Activated naive CD4-positive, alpha-beta T cell treated with anti-CD3 and anti-CD28 coated beads for 36 hours (primary cell): ENCODE measurements at regions of chr18 and their contacts with region 1.

Region 1: DNA sequence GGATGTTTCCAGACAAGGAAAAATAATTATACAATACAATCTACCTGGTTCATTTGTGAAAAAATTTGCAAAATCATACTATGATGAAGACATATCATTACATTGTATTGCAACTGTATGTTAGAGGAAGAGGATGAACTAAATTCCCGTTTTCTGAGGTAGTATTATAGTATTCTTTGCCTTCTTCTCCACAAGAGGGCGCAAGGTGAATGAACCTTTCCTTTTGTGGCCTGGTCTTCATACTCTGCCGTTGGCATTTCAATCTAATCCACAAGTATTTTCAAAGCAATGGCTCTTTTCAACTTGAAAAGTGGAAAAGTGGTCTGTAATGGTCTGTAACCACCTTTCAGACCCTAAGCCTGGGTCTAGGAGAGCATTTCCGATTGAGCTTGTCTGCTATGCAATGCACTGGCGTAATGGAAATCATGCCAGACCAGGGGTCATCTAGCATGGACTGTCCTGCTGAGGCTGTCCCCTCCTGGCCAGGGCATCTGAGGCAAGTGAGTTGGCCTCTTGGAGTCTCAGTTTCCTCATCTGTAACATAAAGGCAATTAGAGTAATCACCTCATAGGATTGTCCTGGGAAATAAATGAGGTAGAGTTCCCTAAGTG is 30.8 kb upstream of the ZNF396 start:
- DNase-seq: peak; percentile 62
- H3K4me3 Mint-ChIP-seq: no peak overlapping the region
- H3K27ac Mint-ChIP-seq: no peak overlapping the region
- H3K4me1 Mint-ChIP-seq: peaks cover 17% of the 10 kb centered on the region
- H3K27me3 Mint-ChIP-seq: no peaks in the 10 kb centered on the region

Region 2: DNA sequence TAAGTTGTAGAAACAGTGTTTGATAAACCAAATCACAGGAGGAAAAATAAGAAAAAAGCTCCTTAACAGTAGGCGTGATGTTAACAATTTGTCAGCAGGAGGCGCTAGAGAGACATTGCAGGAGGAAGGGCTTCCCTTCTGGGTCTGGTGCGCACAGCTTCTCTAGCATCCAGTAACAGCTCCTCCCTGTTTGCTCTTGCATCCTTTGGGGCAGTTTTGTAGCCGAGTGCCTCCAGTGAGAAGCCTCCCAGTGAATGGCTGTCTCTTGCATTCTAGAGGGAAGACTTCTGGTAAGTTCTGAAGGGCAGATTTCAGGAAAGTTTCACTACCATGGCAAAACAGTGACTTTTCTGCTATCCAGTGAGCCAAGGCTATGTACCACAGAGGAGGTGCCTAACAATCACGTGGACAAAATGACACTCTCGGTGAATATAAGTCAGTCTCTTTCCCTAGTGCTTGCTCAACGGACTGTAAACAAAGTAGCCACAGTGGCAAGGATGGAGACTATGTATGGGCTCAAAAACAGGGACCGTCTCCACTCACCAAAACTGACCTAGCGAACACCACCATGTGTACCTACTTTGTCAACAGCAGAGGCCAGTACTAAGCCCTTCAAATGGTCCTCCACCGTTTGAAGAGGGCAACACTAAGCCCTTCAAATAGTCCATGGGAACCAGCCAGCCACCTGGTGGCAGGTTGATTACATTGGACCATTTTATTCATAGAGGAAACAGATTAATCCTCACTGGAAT is 21.2 kb before region 1 on chr18:
- CTCF ChIA-PET with region 1: interaction called, 3 read pairs
- intact Hi-C with region 1: loop called (anchors 1 kb)
- DNase-seq: peak; percentile 81
- H3K4me3 Mint-ChIP-seq: no peak overlapping the region
- H3K27ac Mint-ChIP-seq: no peak overlapping the region
- H3K4me1 Mint-ChIP-seq: peaks cover 2% of the 10 kb centered on the region
- H3K27me3 Mint-ChIP-seq: peaks cover 23% of the 10 kb centered on the region

Region 3: DNA sequence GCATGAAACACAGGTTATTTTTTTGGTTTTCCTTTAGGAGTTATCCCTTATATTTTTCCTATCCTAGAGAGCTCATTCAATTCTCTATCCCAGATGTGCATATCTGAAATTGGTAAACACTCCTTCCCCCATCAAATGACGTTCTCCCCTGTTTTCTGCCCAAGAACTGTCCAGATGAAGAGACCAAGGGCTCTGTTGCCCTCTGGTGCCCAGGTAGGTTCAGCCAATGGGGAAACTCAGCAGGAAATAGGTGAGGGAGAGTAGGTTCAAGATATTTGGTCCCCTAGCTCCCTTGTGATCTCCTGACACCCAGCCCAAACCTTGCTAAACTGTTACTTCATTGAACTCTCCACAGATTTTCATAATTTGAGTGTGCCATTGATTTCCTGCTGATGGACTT is 103.9 kb after region 1 on chr18:
- CTCF ChIA-PET with region 1: interaction called, 3 read pairs
- intact Hi-C with region 1: loop called (anchors 1 kb)
- DNase-seq: no peak
- H3K4me3 Mint-ChIP-seq: no peak overlapping the region
- H3K27ac Mint-ChIP-seq: no peak overlapping the region
- H3K4me1 Mint-ChIP-seq: no peaks in the 10 kb centered on the region
- H3K27me3 Mint-ChIP-seq: no peaks in the 10 kb centered on the region

Region 4: GRCh38 chr18:35624146-35624545 is 216.2 kb after region 1 on chr18:
- CTCF ChIA-PET with region 1: no interaction called
- intact Hi-C with region 1: loop called (anchors 5 kb)
- DNase-seq: no peak
- H3K4me3 Mint-ChIP-seq: peak overlapping the region; percentile 20
- H3K27ac Mint-ChIP-seq: peak overlapping the region; percentile 48
- H3K4me1 Mint-ChIP-seq: peaks cover 33% of the 10 kb centered on the region
- H3K27me3 Mint-ChIP-seq: no peaks in the 10 kb centered on the region

Region 5: GRCh38 chr18:35949903-35950627 is 542.1 kb after region 1 on chr18:
- CTCF ChIA-PET with region 1: interaction called, 3 read pairs
- intact Hi-C with region 1: loop called (anchors 1 kb)
- DNase-seq: peak; percentile 61
- H3K4me3 Mint-ChIP-seq: peak overlapping the region; percentile 79
- H3K27ac Mint-ChIP-seq: no peak overlapping the region
- H3K4me1 Mint-ChIP-seq: no peaks in the 10 kb centered on the region
- H3K27me3 Mint-ChIP-seq: peaks cover 11% of the 10 kb centered on the region